ENCODE measurements at regions of chr7 and their contacts with region 1.

Region 1: GRCh38 chr7:142535123-142535779 is 214.0 kb upstream of the PRSS1 start:
- DNase-seq: peak; percentile 20
- ATAC-seq: peak; percentile 99
- H3K4me3 ChIP-seq: no peak overlapping the region
- H3K27ac ChIP-seq: no peak overlapping the region
- H3K4me1 ChIP-seq: no peaks in the 10 kb centered on the region
- H3K27me3 ChIP-seq: no peaks in the 10 kb centered on the region
- CTCF ChIP-seq: peak; percentile 74 to 84 (median 84)
- EP300 ChIP-seq: no peak
- POLR2A ChIP-seq: no peak
- RAD21 ChIP-seq: peak; percentile 73

Region 2: GRCh38 chr7:142546452-142546851 is 11.2 kb after region 1 on chr7:
- CTCF ChIA-PET with region 1: interaction called, 15 read pairs
- POLR2A ChIA-PET with region 1: no interaction called
- RAD21 ChIA-PET with region 1: no interaction called
- SMC1A ChIA-PET with region 1: interaction called, 5 read pairs
- in situ Hi-C with region 1: no loop called
- intact Hi-C with region 1: no loop called
- DNase-seq: no peak
- ATAC-seq: no peak
- H3K4me3 ChIP-seq: no peak overlapping the region
- H3K27ac ChIP-seq: no peak overlapping the region
- H3K4me1 ChIP-seq: no peaks in the 10 kb centered on the region
- H3K27me3 ChIP-seq: no peaks in the 10 kb centered on the region; a peak in 1 of 4 replicates
- CTCF ChIP-seq: no peak
- EP300 ChIP-seq: no peak
- POLR2A ChIP-seq: no peak
- RAD21 ChIP-seq: no peak

Region 3: GRCh38 chr7:142581346-142581745 is 46.1 kb after region 1 on chr7:
- CTCF ChIA-PET with region 1: interaction called, 62 read pairs
- POLR2A ChIA-PET with region 1: no interaction called
- RAD21 ChIA-PET with region 1: interaction called, 48 read pairs
- SMC1A ChIA-PET with region 1: interaction called, 46 read pairs
- in situ Hi-C with region 1: no loop called
- intact Hi-C with region 1: no loop called
- DNase-seq: no peak
- ATAC-seq: peak; percentile 65
- H3K4me3 ChIP-seq: no peak overlapping the region
- H3K27ac ChIP-seq: no peak overlapping the region
- H3K4me1 ChIP-seq: peaks cover 10% of the 10 kb centered on the region
- H3K27me3 ChIP-seq: no peaks in the 10 kb centered on the region
- CTCF ChIP-seq: no peak
- EP300 ChIP-seq: no peak
- POLR2A ChIP-seq: no peak
- RAD21 ChIP-seq: no peak

Region 4: GRCh38 chr7:142598297-142598696 is 63.0 kb after region 1 on chr7:
- CTCF ChIA-PET with region 1: interaction called, 19 read pairs
- POLR2A ChIA-PET with region 1: no interaction called
- RAD21 ChIA-PET with region 1: interaction called, 6 read pairs
- SMC1A ChIA-PET with region 1: interaction called, 13 read pairs
- in situ Hi-C with region 1: no loop called
- intact Hi-C with region 1: no loop called
- DNase-seq: no peak
- ATAC-seq: no peak
- H3K4me3 ChIP-seq: no peak overlapping the region
- H3K27ac ChIP-seq: no peak overlapping the region
- H3K4me1 ChIP-seq: no peaks in the 10 kb centered on the region
- H3K27me3 ChIP-seq: peaks cover 0 to 5% of the 10 kb centered on the region in 2 experiments; a peak in 1 of 4 replicates
- CTCF ChIP-seq: no peak
- EP300 ChIP-seq: no peak
- POLR2A ChIP-seq: no peak
- RAD21 ChIP-seq: no peak

Region 5: DNA sequence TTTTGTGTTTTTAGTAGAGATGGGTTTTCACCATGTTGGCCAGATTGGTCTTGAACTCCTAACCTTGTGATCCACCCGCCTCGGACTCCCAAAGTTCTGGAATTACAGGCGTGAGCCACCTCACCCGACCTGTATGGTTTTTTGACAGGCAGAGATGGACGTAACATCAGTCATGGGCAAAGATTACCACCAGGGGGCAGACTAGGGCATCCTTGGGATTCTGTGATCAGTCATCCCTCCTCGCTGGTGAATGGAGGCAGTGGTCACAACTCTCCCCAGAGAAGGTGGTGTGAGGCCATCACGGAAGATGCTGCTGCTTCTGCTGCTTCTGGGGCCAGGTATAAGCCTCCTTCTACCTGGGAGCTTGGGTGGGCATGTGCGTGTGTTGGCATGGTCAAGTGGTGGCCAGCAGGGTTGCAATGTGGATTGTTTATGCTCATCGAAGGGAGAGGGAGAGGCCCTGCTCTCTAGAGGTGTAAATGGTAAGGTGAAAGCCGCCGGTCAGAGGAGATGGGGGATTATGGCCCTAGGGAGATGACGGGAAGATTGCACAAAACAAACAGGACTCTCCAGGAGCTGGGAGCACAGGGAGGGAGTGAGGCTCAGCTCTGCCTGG is 91.3 kb after region 1 on chr7:
- CTCF ChIA-PET with region 1: interaction called, 26 read pairs
- POLR2A ChIA-PET with region 1: no interaction called
- RAD21 ChIA-PET with region 1: interaction called, 9 read pairs
- SMC1A ChIA-PET with region 1: interaction called, 8 read pairs
- in situ Hi-C with region 1: no loop called
- intact Hi-C with region 1: loop called (anchors 1 kb)
- DNase-seq: no peak
- ATAC-seq: peak; percentile 96
- H3K4me3 ChIP-seq: no peak overlapping the region
- H3K27ac ChIP-seq: no peak overlapping the region
- H3K4me1 ChIP-seq: no peaks in the 10 kb centered on the region
- H3K27me3 ChIP-seq: peaks cover 0 to 3% of the 10 kb centered on the region in 2 experiments; a peak in 1 of 4 replicates
- CTCF ChIP-seq: peak; percentile 56 to 79 (median 69)
- EP300 ChIP-seq: no peak
- POLR2A ChIP-seq: no peak
- RAD21 ChIP-seq: peak; percentile 37